MCF 10A (cell line): ENCODE measurements at regions of chr17 and their contacts with region 1.

Region 1: DNA sequence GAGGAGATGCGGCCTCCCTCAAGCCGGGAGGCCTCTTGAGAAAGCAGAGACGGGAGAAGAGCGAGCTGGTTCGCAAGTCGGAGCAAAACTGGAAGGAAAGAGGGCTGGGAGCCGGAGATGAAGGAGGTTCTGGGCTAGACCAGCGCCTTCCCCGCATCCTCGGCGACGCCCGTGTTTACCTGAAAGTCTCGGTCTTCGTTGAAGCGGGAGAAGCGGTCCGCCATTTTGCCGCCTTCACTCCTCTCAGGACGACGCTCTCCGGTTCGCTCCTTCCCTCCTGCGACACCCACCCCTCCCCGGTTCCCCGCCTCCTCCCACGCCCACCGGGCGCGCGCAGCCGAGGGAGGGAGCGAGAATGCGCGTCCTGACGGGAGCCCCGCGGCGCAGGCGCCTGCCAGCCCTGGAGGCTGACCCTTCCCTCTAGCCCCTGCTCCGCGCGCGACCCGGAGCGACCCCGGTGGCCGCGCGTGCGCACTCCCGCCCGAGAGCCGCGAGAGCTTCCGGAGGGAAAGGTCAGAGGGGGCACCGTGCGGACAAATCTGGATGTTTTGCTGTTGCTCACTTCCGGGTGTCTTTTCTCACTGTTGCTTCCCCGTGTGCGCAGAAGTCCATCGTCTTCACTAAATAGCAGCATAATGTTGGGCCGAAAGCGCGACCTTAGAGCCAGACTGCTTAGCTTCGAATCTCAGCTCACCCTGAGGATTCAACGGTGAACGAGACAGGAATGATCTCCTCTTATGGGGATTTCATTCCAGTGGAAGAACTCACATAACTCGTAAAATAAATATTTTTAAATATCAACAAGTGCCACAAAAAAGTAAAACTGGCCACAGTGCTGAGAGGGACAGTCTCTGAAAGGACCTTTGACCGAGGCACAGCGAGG is at the start of gene GPATCH8:
- DNase-seq: peak; percentile 94
- H3K4me3 Mint-ChIP-seq: peak within 1 kb of the TSS; percentile 82
- H3K27ac Mint-ChIP-seq: peak within 1 kb of the TSS; percentile 96
- H3K4me1 Mint-ChIP-seq: peaks cover 12% of the 10 kb centered on the region
- H3K27me3 Mint-ChIP-seq: no peaks in the 10 kb centered on the region
- CTCF ChIP-seq: no peak
- total RNA-seq, gene GPATCH8: 40.8 and 43.6 TPM in 2 replicates

Region 2: GRCh38 chr17:44400226-44400847 is 103.1 kb before region 1 on chr17:
- CTCF ChIA-PET with region 1: interaction called, 5 read pairs
- POLR2A ChIA-PET with region 1: no interaction called
- intact Hi-C with region 1: loop called (anchors 5 kb)
- DNase-seq: peak; percentile 38
- H3K4me3 Mint-ChIP-seq: no peak overlapping the region
- H3K27ac Mint-ChIP-seq: no peak overlapping the region
- H3K4me1 Mint-ChIP-seq: no peaks in the 10 kb centered on the region
- H3K27me3 Mint-ChIP-seq: no peaks in the 10 kb centered on the region
- CTCF ChIP-seq: peak; percentile 39

Region 3: GRCh38 chr17:44417553-44417952 is 85.8 kb before region 1 on chr17:
- CTCF ChIA-PET with region 1: no interaction called
- POLR2A ChIA-PET with region 1: interaction called, 11 read pairs
- intact Hi-C with region 1: loop called (anchors 5 kb)
- DNase-seq: peak; percentile 95
- H3K4me3 Mint-ChIP-seq: no peak overlapping the region
- H3K27ac Mint-ChIP-seq: peak overlapping the region; percentile 82
- H3K4me1 Mint-ChIP-seq: peaks cover 14% of the 10 kb centered on the region
- H3K27me3 Mint-ChIP-seq: no peaks in the 10 kb centered on the region
- CTCF ChIP-seq: no peak

Region 4: DNA sequence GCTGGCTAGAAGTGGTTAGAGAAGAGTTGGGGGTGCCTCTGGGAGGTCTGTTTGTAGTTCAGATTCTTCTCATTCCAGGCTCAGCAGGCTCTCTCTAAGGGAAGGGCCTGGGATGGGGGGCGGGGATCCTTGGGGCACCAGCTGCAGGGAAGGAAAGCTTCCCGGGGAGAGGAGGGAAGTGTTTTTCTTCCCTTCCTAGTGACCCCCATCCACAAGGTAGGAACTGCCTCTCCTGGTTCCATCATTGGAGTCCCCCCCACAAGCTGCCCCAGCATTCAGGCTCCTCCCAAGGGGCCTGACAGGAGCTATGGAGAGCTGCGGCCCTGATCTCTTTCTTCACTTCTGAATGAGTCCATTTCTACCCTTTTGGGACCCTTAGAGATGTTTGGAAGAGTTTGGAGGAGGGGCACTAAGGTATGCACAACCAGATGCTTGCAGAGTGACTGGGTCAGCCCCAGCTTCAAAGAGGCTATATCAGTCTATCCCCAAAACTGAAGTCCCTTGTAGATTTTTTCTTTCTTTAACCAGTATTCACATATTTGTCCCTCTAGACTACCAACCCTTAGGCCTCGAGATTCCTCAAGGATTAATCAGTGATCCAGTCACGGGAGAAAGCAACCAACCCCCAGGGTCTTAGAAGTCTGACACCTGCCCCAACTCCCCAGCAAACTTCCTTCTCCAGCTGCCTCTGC is 40.0 kb after region 1 on chr17:
- CTCF ChIA-PET with region 1: no interaction called
- POLR2A ChIA-PET with region 1: no interaction called
- intact Hi-C with region 1: no loop called
- DNase-seq: peak; percentile 60
- H3K4me3 Mint-ChIP-seq: peak overlapping the region; percentile 14
- H3K27ac Mint-ChIP-seq: peak overlapping the region; percentile 92
- H3K4me1 Mint-ChIP-seq: peaks cover 51% of the 10 kb centered on the region
- H3K27me3 Mint-ChIP-seq: no peaks in the 10 kb centered on the region
- CTCF ChIP-seq: no peak

Region 5: DNA sequence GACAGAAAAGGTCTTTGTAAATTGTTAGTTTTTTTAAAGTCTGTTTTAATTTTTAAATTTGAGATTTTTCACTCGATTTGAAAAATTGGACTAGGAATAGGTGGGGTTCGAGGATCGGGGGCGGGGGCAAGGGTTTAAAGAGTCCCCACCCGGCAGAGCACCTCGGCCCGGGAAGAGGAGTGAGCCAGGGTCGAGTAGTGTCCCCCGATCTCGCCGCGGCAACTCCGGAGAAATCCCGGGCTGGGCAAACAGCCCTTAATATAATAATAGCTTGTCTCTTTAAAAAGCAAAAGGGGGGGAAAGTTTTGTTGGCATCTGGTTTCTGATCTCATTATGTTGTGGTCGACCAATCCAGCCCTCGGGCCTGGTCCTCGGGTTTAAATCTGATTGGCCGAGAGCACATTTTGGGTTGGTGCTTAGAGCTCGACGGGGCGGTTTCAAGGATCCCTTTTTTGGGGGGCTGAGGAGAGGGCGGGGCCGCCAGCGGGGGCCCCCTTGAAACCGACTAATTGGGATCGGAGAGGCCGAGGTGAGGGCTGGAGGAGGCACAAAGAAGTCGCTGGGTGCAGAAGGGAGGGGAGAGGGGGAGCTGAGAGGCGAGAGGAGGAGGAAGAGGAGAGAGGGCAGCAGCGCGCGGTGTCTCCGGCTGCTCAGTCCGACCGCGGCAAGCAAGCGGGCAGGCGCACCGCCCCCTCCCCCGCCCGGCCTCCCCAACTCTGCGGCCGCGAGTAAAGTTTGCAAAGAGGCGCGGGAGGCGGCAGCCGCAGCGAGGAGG is 53.6 kb after region 1 on chr17 and contains the start of gene FZD2:
- CTCF ChIA-PET with region 1: interaction called, 3 read pairs
- POLR2A ChIA-PET with region 1: interaction called, 16 read pairs
- intact Hi-C with region 1: no loop called
- DNase-seq: peak; percentile 98
- H3K4me3 Mint-ChIP-seq: peak within 1 kb of the TSS; percentile 95
- H3K27ac Mint-ChIP-seq: peak within 1 kb of the TSS; percentile 100
- H3K4me1 Mint-ChIP-seq: peaks cover 30% of the 10 kb centered on the region
- H3K27me3 Mint-ChIP-seq: no peaks in the 10 kb centered on the region
- CTCF ChIP-seq: no peak
- total RNA-seq, gene FZD2: 6.8 and 10.1 TPM in 2 replicates

Region 6: GRCh38 chr17:44689477-44690217 is 186.3 kb after region 1 on chr17 and contains the start of gene CCDC43:
- CTCF ChIA-PET with region 1: interaction called, 3 read pairs
- POLR2A ChIA-PET with region 1: interaction called, 14 read pairs
- intact Hi-C with region 1: no loop called
- DNase-seq: peak; percentile 88
- H3K4me3 Mint-ChIP-seq: peak within 1 kb of the TSS; percentile 96
- H3K27ac Mint-ChIP-seq: peak within 1 kb of the TSS; percentile 95
- H3K4me1 Mint-ChIP-seq: peaks cover 21% of the 10 kb centered on the region
- H3K27me3 Mint-ChIP-seq: no peaks in the 10 kb centered on the region
- CTCF ChIP-seq: no peak
- total RNA-seq, gene CCDC43: 32.8 and 33.6 TPM in 2 replicates